ENCODE measurements at regions of chr11 and their contacts with region 1.

Region 1: DNA sequence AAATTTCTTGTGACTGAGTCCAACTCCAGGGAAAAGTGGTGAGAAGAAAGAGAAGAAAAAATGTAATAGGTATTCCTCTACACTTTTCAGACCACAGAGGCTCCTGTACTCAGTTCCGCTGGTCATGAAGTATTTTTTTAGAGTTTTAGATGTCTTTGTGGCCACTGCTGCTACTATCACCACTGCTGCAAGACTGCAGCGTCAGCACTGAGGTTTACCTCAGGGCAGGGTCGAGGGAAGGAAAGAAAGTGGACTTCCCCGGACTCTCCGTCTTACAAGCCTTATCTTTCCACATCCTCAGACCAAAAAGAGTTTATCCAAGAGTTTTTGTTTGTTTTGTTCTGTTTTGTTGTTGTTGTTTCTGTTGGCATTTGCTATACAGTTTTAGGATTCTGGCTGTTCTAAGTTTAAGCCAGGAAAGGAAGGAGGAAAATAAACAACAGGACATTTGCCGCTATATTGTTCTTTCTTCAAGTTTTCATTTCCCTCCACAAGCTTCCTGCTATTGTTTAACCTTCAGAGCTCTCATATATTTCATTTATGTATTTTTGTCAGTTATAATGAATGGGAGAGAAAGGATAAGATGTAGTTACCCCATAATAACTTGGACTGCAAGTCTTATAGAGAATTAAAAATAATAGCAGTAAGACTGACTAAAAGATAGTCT is 919.3 kb downstream of the NTM start:
- DNase-seq: no peak
- ATAC-seq: no peak

Region 2: DNA sequence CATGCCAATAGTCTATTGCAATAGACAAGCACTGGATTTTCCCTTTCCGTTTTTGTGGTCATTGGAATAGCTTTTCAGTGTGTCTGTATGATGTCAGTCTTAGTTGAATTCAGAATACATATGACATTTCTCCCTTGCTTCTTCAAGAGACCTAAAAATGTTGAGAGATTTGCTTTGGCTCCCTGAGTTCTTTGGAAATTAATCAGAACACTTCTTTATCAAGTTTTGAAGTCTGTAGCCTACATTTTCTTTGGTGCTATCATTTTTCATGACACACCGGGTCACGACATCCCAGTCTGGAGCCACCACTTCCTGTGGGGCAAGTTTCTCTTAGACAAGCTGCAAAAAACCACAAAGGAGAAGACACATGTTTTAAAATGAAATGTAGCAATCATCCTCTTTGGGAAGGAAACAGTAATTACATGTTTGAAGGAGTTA is 395.5 kb after region 1 on chr11:
- intact Hi-C with region 1: no loop called
- DNase-seq: no peak
- ATAC-seq: no peak

Region 3: DNA sequence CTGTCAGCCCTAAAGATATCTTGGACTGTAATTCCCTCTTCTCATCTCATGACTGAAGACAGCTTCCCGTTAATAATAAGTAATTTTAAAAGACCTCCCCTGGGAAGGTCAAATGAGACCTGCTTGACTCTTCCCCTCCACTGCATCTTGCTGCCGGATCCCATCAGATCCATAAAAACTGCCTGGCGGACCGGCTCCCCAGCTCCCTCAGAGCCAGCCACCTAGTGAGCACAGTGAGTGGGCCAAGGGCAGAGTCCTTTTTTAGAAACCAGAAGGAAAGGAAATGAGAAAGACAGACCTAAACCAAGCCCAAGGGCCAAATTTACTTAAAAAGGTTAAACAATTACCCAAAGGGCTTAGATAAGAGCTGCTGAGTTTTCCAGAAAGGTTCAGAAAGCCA is 647.3 kb after region 1 on chr11:
- intact Hi-C with region 1: loop called in 1 of 2 experiments (anchors 10 kb)
- DNase-seq: no peak
- ATAC-seq: no peak

Measured in left colon (tissue), 2 donors.